Naive thymus-derived CD4-positive, alpha-beta T cell (primary cell): ENCODE measurements at regions of chr7 and their contacts with region 1.

Region 1: GRCh38 chr7:17255926-17256325 is 42.5 kb upstream of the AHR start:
- DNase-seq: no peak
- ATAC-seq: no peak
- H3K4me3 ChIP-seq: no peak overlapping the region
- H3K4me3 Mint-ChIP-seq: no peak overlapping the region
- H3K27ac ChIP-seq: no peak overlapping the region
- H3K27ac Mint-ChIP-seq: no peak overlapping the region
- H3K4me1 ChIP-seq: no peaks in the 10 kb centered on the region
- H3K4me1 Mint-ChIP-seq: peaks cover 0 to 3% (median 0%) of the 10 kb centered on the region in 7 donors
- H3K27me3 ChIP-seq: no peaks in the 10 kb centered on the region
- H3K27me3 Mint-ChIP-seq: no peaks in the 10 kb centered on the region

Region 2: GRCh38 chr7:17275749-17276671 is 20.1 kb after region 1 on chr7:
- CTCF ChIA-PET with region 1: no interaction called
- POLR2A ChIA-PET with region 1: no interaction called
- intact Hi-C with region 1: loop called in 1 of 2 experiments (anchors 2 kb)
- DNase-seq: no peak
- ATAC-seq: no peak
- H3K4me3 ChIP-seq: no peak overlapping the region
- H3K4me3 Mint-ChIP-seq: no peak overlapping the region
- H3K27ac ChIP-seq: no peak overlapping the region
- H3K27ac Mint-ChIP-seq: no peak overlapping the region
- H3K4me1 ChIP-seq: peaks cover 0 to 7% of the 10 kb centered on the region in 2 donors
- H3K4me1 Mint-ChIP-seq: peaks cover 7 to 17% (median 12%) of the 10 kb centered on the region in 7 donors
- H3K27me3 ChIP-seq: no peaks in the 10 kb centered on the region
- H3K27me3 Mint-ChIP-seq: no peaks in the 10 kb centered on the region

Region 3: DNA sequence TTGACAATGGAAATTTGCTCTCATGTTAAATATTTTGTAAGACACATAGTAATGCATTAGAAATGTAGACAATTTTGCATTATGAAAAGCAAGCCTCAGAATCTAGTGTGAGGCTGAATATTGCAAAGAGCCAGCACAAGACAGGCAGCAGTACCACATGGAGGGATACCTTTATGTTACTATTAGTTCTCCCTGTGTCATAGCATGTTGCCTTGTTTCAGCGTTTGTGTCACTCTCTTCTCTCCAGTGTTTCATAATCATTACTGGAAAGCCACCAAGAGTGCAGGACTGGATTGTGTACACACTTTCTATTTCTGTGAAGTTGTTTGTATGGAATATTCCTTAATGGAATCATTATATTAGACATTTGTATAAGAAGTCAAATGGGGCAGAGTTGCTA is 51.1 kb after region 1 on chr7:
- CTCF ChIA-PET with region 1: no interaction called
- POLR2A ChIA-PET with region 1: no interaction called
- intact Hi-C with region 1: no loop called
- DNase-seq: no peak
- ATAC-seq: no peak
- H3K4me3 ChIP-seq: no peak overlapping the region
- H3K4me3 Mint-ChIP-seq: no peak overlapping the region
- H3K27ac ChIP-seq: no peak overlapping the region
- H3K27ac Mint-ChIP-seq: no peak overlapping the region
- H3K4me1 ChIP-seq: peaks cover 4 to 32% of the 10 kb centered on the region in 2 donors
- H3K4me1 Mint-ChIP-seq: peaks cover 12 to 28% (median 23%) of the 10 kb centered on the region in 7 donors
- H3K27me3 ChIP-seq: no peaks in the 10 kb centered on the region
- H3K27me3 Mint-ChIP-seq: no peaks in the 10 kb centered on the region

Region 4: DNA sequence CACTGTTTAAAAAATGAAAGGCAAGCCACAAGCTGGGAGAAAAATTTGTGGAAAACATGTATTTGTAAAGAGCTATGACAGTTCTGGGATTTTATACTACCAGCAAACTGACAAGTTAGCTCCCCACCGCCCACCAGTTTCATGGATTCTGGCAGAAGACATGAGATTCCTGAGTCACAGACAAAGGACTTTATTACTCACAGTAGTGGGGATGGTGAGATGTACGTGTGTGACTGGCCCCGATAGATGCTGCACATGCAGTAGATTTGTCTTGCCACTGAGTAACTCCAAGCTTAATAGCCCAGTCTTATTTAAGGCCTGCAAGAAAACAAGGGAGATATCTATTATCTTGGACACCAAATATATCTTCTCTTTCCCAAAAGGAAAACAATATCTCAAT is 324.2 kb after region 1 on chr7:
- CTCF ChIA-PET with region 1: no interaction called
- POLR2A ChIA-PET with region 1: no interaction called
- intact Hi-C with region 1: no loop called
- DNase-seq: no peak
- ATAC-seq: no peak
- H3K4me3 ChIP-seq: no peak overlapping the region
- H3K4me3 Mint-ChIP-seq: no peak overlapping the region
- H3K27ac ChIP-seq: no peak overlapping the region
- H3K27ac Mint-ChIP-seq: no peak overlapping the region
- H3K4me1 ChIP-seq: no peaks in the 10 kb centered on the region
- H3K4me1 Mint-ChIP-seq: no peaks in the 10 kb centered on the region
- H3K27me3 ChIP-seq: no peaks in the 10 kb centered on the region
- H3K27me3 Mint-ChIP-seq: peaks cover 0 to 9% (median 5%) of the 10 kb centered on the region in 5 donors

Region 5: DNA sequence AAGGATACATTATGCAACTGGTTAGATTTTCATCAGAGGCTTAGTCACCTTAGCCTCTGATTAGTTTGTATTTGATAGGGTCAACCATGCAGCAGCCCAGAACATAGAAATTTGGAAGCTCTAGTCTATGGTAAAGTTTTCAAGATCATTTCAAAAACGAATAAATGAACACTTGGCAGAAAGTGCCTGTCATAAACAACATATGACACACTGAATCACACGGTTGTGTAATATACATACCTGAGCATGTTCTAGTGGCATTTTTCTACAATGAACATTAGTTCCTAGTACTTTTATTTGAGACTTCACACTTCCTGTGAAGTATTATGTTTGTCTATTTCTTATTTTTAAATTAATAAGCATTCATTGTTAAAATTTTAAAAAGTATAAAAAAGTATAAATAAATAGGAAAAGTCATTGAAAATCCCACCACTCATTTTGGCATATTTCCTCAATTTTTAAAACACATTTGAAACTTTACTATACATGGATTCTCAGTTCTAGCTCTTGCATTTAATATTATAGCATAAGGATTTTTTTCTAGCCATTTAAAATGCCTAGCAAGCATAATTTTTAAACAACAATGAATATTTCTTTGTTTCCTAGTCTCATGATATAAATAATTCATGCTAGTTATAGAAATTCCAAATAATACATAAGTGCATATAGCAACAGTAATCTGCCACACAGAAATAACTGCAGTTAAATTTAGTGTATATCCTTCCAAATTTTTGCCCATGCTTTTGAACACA is 797.4 kb after region 1 on chr7:
- CTCF ChIA-PET with region 1: no interaction called
- POLR2A ChIA-PET with region 1: no interaction called
- intact Hi-C with region 1: no loop called
- DNase-seq: no peak
- ATAC-seq: no peak
- H3K4me3 ChIP-seq: no peak overlapping the region
- H3K4me3 Mint-ChIP-seq: no peak overlapping the region
- H3K27ac ChIP-seq: no peak overlapping the region
- H3K27ac Mint-ChIP-seq: no peak overlapping the region
- H3K4me1 ChIP-seq: no peaks in the 10 kb centered on the region
- H3K4me1 Mint-ChIP-seq: no peaks in the 10 kb centered on the region
- H3K27me3 ChIP-seq: no peaks in the 10 kb centered on the region
- H3K27me3 Mint-ChIP-seq: peaks cover 0 to 36% (median 17%) of the 10 kb centered on the region in 5 donors